ENCODE measurements at regions of chr18 and their contacts with region 1.

Region 1: GRCh38 chr18:74342416-74343043 is 26.9 kb downstream of the C18orf63 start:
- DNase-seq: peak in 5 of 9 experiments; percentile 22 to 75 (median 41)
- ATAC-seq: no peak
- H3K4me3 ChIP-seq: no peak overlapping the region
- H3K4me3 Mint-ChIP-seq: no peak overlapping the region
- H3K27ac ChIP-seq: no peak overlapping the region
- H3K27ac Mint-ChIP-seq: no peak overlapping the region
- H3K4me1 ChIP-seq: no peaks in the 10 kb centered on the region
- H3K4me1 Mint-ChIP-seq: no peaks in the 10 kb centered on the region
- H3K27me3 ChIP-seq: no peaks in the 10 kb centered on the region
- H3K27me3 Mint-ChIP-seq: peaks cover 7% of the 10 kb centered on the region
- CTCF ChIP-seq: peak; percentile 74

Region 2: GRCh38 chr18:72762515-72763122 is 1579.9 kb before region 1 on chr18:
- CTCF ChIA-PET with region 1: interaction called, 3 read pairs
- POLR2A ChIA-PET with region 1: no interaction called
- intact Hi-C with region 1: loop called in 1 of 2 experiments (anchors 2 kb)
- DNase-seq: peak in 2 of 9 experiments; percentile 4 to 42
- ATAC-seq: no peak
- H3K4me3 ChIP-seq: no peak overlapping the region
- H3K4me3 Mint-ChIP-seq: no peak overlapping the region
- H3K27ac ChIP-seq: no peak overlapping the region
- H3K27ac Mint-ChIP-seq: no peak overlapping the region
- H3K4me1 ChIP-seq: no peaks in the 10 kb centered on the region
- H3K4me1 Mint-ChIP-seq: no peaks in the 10 kb centered on the region
- H3K27me3 ChIP-seq: no peaks in the 10 kb centered on the region
- H3K27me3 Mint-ChIP-seq: no peaks in the 10 kb centered on the region
- CTCF ChIP-seq: peak; percentile 64

Region 3: DNA sequence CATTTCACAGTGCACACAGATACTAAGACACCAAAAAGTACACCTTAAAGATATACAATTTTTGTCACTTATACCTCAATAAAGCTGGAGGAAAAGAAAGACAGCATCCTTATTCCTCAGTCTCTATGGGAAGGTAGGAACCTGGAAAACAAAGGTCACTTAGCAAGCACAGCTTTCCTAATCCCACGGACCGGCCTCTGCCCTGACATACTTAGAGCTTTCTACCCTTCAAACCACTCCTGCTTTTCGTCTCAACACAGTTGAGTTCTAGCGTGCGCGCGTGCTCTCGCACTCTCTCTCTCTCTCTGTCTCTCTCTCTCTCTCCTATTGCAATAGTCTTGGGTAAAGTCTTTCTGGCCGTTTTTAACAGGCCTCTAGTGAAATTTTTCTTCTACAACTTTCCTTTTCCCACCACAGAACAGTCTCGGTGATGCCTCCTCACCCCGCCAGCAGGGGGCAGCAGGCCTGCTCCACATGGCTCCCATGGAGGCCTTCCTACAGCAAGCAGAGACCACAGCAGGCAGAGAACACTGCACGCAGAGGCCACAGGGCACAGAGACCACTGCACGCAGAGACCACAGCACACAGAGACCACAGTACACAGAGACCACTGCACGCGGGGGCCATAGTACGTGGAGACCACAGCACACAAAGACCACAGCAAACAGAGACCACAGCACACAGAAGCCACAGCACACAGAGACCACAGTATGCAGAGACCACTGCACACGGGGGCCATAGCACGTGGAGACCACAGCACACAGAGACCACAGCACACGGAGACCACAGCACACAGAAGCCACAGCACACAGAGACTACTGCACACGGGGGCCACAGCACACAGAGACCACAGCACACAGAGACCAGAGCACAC is 301.8 kb before region 1 on chr18:
- CTCF ChIA-PET with region 1: interaction called, 8 read pairs
- POLR2A ChIA-PET with region 1: no interaction called
- intact Hi-C with region 1: loop called in 1 of 2 experiments (anchors 1 kb)
- DNase-seq: peak; percentile 22 to 70 (median 62)
- ATAC-seq: peak; percentile 86
- H3K4me3 ChIP-seq: no peak overlapping the region
- H3K4me3 Mint-ChIP-seq: no peak overlapping the region
- H3K27ac ChIP-seq: no peak overlapping the region
- H3K27ac Mint-ChIP-seq: no peak overlapping the region
- H3K4me1 ChIP-seq: no peaks in the 10 kb centered on the region
- H3K4me1 Mint-ChIP-seq: no peaks in the 10 kb centered on the region
- H3K27me3 ChIP-seq: peaks cover 0 to 2% of the 10 kb centered on the region in 2 experiments
- H3K27me3 Mint-ChIP-seq: no peaks in the 10 kb centered on the region
- CTCF ChIP-seq: peak; percentile 67

Region 4: DNA sequence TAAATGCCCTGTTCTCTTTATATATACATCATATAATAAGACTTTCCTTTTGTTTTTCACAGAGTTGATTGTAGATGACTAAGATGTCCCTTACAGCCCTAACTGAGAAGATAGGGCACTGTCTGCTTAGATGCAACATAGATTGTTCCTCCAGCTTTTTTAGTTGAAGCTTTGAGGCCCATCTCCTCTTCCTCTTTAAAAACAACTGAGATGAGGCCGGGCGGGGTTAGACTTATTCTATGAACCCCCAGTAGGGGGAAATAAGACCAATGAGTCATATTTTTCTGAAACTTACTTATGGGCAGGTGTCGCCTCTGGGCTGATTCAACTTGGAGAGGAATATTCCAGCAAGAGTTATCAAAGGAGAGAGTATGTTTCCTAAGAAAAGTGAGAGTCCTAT is 279.5 kb before region 1 on chr18:
- CTCF ChIA-PET with region 1: no interaction called
- POLR2A ChIA-PET with region 1: no interaction called
- intact Hi-C with region 1: no loop called
- DNase-seq: peak in 1 of 9 experiments; percentile 25
- ATAC-seq: no peak
- H3K4me3 ChIP-seq: no peak overlapping the region
- H3K4me3 Mint-ChIP-seq: no peak overlapping the region
- H3K27ac ChIP-seq: no peak overlapping the region
- H3K27ac Mint-ChIP-seq: no peak overlapping the region
- H3K4me1 ChIP-seq: peaks cover 22% of the 10 kb centered on the region
- H3K4me1 Mint-ChIP-seq: peaks cover 32% of the 10 kb centered on the region
- H3K27me3 ChIP-seq: no peaks in the 10 kb centered on the region
- H3K27me3 Mint-ChIP-seq: no peaks in the 10 kb centered on the region
- CTCF ChIP-seq: peak; percentile 5

Region 5: DNA sequence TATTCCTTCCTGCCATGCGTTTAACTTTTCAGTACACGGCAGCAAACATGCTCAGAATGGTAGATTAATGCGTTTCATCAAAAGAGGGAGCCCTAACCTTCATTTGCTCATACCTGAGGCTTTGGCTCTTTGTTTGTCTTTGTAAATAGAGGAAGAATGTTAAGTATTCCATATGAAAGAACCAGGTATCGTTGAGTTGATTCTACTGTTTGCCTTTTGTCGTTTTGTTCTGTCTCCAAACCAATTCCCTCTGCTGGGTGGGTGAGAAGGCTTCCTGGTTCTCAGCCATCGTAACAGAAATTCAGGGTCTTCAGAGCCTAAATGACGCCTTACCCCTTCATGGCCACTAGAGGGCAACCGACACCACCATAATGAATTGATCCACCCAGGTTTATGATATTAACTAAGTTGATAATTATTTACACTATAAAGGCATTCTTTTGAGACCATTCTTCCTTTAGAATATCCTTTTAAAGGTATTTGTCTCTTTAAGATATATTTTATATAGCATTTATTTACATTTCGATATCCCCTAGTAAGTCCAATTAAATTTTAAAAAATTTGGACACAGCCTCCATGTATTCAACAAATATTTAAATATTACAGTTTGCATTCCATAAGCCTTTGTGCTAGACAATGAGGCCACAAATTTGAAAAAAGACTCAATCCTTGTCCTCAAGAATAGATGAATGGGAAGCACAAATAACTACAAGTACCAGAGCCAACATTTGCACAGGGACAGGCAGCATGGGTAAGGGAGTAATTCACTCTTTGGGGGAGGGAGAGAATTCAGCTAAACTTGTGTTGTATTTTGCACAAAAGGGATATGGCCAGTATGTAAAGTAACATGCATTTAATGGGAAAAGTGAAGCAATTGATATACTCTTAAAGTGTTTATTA is 146.1 kb before region 1 on chr18:
- CTCF ChIA-PET with region 1: interaction called, 64 read pairs
- POLR2A ChIA-PET with region 1: interaction called, 3 read pairs
- intact Hi-C with region 1: loop called (anchors 1 kb)
- DNase-seq: peak; percentile 8 to 86 (median 46)
- ATAC-seq: peak; percentile 98
- H3K4me3 ChIP-seq: peak overlapping the region; percentile 21 to 42
- H3K4me3 Mint-ChIP-seq: peak overlapping the region; percentile 79
- H3K27ac ChIP-seq: no peak overlapping the region
- H3K27ac Mint-ChIP-seq: peak overlapping the region; percentile 85
- H3K4me1 ChIP-seq: peaks cover 4% of the 10 kb centered on the region
- H3K4me1 Mint-ChIP-seq: peaks cover 6% of the 10 kb centered on the region
- H3K27me3 ChIP-seq: no peaks in the 10 kb centered on the region
- H3K27me3 Mint-ChIP-seq: peaks cover 18% of the 10 kb centered on the region
- CTCF ChIP-seq: peak; percentile 89

Region 6: DNA sequence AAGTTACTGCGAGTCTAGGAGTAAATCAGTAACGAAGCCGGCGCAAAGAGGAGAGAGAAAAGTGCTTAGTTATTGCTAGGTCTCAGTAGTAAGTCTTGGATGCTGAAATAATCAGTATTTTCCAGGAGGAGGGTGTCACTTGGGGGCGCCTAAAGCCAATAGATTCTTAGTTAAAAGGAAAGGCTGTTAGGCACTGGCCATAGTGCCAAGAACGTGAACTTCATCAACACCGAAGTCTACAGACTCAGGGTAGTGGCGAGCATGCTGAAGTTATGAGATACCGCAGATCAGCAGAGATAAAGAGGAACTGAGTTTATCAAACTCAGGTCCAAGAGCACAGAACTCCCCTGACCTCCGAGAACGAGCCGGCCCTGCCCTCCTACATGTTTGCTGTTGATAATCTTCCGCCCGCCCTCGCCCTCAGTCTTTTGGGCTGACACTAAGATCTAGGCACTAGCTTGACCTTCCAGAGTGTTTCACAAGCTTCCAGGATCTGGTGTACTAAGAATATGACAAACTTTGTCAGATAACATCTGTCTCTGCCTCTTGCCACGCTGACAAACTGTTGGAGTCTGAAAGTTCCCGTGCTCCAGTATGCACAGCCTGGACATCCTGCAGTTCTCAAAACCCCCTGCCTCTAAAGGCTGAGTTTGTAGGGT is 100.0 kb before region 1 on chr18:
- CTCF ChIA-PET with region 1: interaction called, 3 read pairs
- POLR2A ChIA-PET with region 1: no interaction called
- intact Hi-C with region 1: loop called in 1 of 2 experiments (anchors 2 kb)
- DNase-seq: no peak
- ATAC-seq: no peak
- H3K4me3 ChIP-seq: no peak overlapping the region
- H3K4me3 Mint-ChIP-seq: no peak overlapping the region
- H3K27ac ChIP-seq: no peak overlapping the region
- H3K27ac Mint-ChIP-seq: no peak overlapping the region
- H3K4me1 ChIP-seq: no peaks in the 10 kb centered on the region
- H3K4me1 Mint-ChIP-seq: no peaks in the 10 kb centered on the region
- H3K27me3 ChIP-seq: no peaks in the 10 kb centered on the region
- H3K27me3 Mint-ChIP-seq: peaks cover 17% of the 10 kb centered on the region
- CTCF ChIP-seq: no peak

Region 7: GRCh38 chr18:74310411-74310810 is 32.1 kb before region 1 on chr18:
- CTCF ChIA-PET with region 1: interaction called, 12 read pairs
- POLR2A ChIA-PET with region 1: no interaction called
- intact Hi-C with region 1: no loop called
- DNase-seq: peak in 2 of 9 experiments; percentile 41 to 55
- ATAC-seq: peak; percentile 73
- H3K4me3 ChIP-seq: no peak overlapping the region
- H3K4me3 Mint-ChIP-seq: no peak overlapping the region
- H3K27ac ChIP-seq: no peak overlapping the region
- H3K27ac Mint-ChIP-seq: no peak overlapping the region
- H3K4me1 ChIP-seq: no peaks in the 10 kb centered on the region
- H3K4me1 Mint-ChIP-seq: peaks cover 4% of the 10 kb centered on the region
- H3K27me3 ChIP-seq: no peaks in the 10 kb centered on the region
- H3K27me3 Mint-ChIP-seq: peaks cover 29% of the 10 kb centered on the region
- CTCF ChIP-seq: no peak

Region 8: DNA sequence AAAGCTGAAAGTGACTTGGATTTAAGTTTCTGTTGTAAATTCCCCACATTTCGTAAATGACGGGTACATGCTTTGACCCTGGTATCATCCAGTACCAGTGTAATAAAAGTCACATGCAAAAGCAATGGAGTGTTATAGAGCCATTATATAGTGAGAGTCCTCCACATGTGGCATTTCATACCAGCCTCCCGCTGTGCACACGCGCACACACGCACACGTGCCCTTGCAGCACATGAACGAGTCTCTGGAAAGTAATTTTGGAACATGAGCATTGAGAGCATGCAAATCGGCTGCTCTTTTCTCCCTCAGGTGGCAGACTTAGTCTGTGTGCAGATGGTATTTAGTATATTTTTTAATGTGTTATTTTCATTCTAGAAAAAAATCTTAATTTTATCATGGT is 453.2 kb after region 1 on chr18:
- CTCF ChIA-PET with region 1: no interaction called
- POLR2A ChIA-PET with region 1: no interaction called
- intact Hi-C with region 1: no loop called
- DNase-seq: no peak
- ATAC-seq: no peak
- H3K4me3 ChIP-seq: no peak overlapping the region
- H3K4me3 Mint-ChIP-seq: no peak overlapping the region
- H3K27ac ChIP-seq: no peak overlapping the region
- H3K27ac Mint-ChIP-seq: no peak overlapping the region
- H3K4me1 ChIP-seq: no peaks in the 10 kb centered on the region
- H3K4me1 Mint-ChIP-seq: peaks cover 10% of the 10 kb centered on the region
- H3K27me3 ChIP-seq: no peaks in the 10 kb centered on the region
- H3K27me3 Mint-ChIP-seq: no peaks in the 10 kb centered on the region
- CTCF ChIP-seq: no peak

Measured in CD8-positive, alpha-beta T cell (primary cell).